ENCODE measurements at regions of chr1 and their contacts with region 1.

Region 1: DNA sequence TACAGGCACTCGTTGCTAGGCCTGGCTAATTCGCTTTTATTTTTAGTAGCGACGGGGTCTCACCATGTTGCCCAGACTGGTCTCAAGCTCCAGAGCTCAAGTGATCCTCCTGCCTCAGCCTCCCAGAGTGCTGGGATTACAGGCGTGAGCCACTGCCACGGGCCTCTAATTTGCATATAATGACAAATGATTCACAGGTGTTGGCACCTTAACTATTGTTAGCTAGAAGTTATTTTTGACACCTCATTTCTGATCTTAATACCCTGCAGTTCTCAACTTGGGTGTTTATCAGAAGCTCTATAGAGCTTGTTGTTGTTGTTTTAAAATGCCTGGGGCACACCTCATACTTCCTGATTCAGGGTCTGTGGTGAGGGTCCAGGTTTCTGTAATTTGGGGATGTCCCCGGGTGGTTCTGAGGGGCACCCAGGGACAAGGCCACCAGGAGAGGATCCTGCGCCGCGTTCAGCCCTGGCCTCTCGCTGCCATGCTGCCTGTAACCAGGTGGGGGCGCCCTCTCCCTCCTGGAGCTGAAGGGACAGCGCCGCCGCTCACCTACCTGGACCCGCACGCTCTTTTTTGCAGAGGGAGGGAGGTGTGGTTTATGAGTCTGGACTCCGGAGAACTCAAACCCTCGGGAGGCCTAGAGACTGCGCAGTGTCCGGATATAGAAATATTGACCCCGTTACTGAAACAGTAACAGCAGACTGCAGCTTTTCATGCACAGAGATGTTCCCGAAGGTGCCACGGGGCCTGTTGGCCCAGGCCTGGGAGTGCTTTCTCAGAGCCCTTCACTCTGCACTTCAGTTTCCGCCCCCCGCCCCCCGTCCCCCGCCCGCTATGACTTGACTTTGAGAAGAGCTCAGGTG is 23.0 kb upstream of the NEK2 start:
- DNase-seq: peak; percentile 88
- ATAC-seq: peak; percentile 91

Region 2: GRCh38 chr1:211667065-211667617 is 31.3 kb before region 1 on chr1:
- intact Hi-C with region 1: no loop called
- DNase-seq: no peak
- ATAC-seq: no peak

Region 3: GRCh38 chr1:211735208-211736170 is 37.1 kb after region 1 on chr1:
- intact Hi-C with region 1: no loop called
- DNase-seq: peak; percentile 63
- ATAC-seq: peak; percentile 86

Region 4: GRCh38 chr1:211752951-211753486 is 54.6 kb after region 1 on chr1:
- intact Hi-C with region 1: no loop called
- DNase-seq: no peak
- ATAC-seq: no peak

Region 5: GRCh38 chr1:211813590-211813989 is 115.2 kb after region 1 on chr1:
- intact Hi-C with region 1: no loop called
- DNase-seq: no peak
- ATAC-seq: peak; percentile 62

Region 6: GRCh38 chr1:211830330-211831142 is 132.1 kb after region 1 on chr1 and contains the start of gene LPGAT1:
- intact Hi-C with region 1: loop called (anchors 10 kb)
- DNase-seq: peak; percentile 87
- ATAC-seq: peak; percentile 97
- total RNA-seq, gene LPGAT1: 37.6 TPM

Region 7: DNA sequence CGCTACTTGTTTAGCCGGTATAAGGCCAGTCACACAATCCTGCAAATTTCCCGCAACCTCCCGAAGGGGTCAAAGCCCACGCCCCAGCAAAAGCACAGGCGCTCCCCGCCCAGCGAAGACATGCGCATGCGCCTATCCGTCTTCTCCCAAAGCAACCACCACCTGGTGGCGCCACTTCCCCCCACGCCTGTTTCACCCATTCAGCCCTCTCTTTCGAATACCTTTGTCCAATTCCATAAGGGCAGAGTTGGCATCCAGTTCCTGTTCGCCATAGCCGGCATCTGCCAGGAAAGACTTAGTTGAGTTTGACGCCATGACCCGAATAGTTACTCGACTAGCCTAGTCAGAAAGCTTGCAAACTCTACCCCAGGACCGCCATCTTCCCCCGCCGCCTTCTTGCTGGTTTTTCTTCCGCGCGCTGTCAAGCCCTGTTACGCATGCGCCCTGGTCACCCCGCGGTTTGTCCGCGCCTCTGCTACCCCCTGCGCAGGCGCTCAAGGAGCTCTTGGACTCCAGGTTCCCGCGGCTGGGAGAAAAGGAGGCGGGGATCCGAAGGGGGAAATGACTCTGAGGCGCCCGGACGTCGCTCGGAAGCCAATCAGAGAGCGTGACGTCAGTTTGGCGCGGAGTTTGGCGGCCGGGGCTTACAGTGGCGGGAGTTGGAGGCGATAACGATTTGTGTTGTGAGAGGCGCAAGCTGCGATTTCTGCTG is 336.9 kb after region 1 on chr1 and contains the starts of genes DTL and INTS7:
- intact Hi-C with region 1: loop called (anchors 10 kb)
- DNase-seq: peak; percentile 98
- ATAC-seq: peak; percentile 98
- total RNA-seq, gene DTL: 0.71 TPM
- total RNA-seq, gene INTS7: 10.4 TPM

Measured in sciatic nerve (tissue), 2 donors.